ENCODE measurements at regions of chr5 and their contacts with region 1.

Region 1: GRCh38 chr5:167482555-167482954 is 808.9 kb upstream of the WWC1 start:
- DNase-seq: no peak
- ATAC-seq: no peak

Region 2: DNA sequence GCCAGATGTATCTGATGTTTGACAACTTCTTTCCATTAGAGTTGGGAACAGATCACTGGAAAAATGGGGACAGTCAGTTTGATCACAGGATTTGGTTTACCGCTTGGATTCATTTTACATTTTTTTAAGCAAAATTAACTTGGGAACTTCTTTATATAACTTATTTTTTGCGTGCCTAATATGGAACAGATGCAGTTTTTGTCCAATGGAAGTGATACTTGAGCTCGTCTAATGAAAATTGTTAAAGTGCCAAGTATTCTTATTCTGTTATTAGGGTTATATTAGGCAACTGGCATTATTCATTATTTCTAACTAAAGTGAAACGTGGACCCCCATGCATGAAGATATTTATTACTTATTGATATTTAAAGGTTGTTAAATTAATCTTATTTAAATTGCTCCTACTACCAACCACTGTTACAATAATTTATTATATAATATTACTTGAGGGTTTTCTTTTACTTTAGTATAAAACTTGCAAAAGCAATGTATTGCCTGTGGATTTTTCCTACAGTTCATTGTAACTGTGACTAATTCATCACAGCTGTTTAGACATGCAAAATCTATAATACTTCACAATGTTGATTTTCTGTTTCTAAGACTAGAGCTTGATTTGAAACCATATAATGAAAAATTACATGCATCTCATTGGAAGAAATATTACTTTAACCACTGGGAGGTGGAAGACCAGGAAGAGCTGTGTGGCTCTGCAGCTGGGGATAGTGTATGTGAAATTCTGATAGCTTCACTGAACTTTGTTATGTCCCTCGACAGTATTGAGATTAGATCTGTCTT is 21.6 kb after region 1 on chr5:
- intact Hi-C with region 1: loop called (anchors 1 kb)
- DNase-seq: no peak
- ATAC-seq: no peak